Activated naive CD4-positive, alpha-beta T cell treated with anti-CD3 and anti-CD28 coated beads for 36 hours (primary cell): ENCODE measurements at regions of chr1 and their contacts with region 1.

Region 1: GRCh38 chr1:219058891-219059820 is 114.5 kb upstream of the LYPLAL1 start:
- DNase-seq: no peak
- H3K4me3 Mint-ChIP-seq: no peak overlapping the region
- H3K27ac Mint-ChIP-seq: no peak overlapping the region
- H3K4me1 Mint-ChIP-seq: peaks cover 10% of the 10 kb centered on the region
- H3K27me3 Mint-ChIP-seq: peaks cover 6% of the 10 kb centered on the region

Region 2: DNA sequence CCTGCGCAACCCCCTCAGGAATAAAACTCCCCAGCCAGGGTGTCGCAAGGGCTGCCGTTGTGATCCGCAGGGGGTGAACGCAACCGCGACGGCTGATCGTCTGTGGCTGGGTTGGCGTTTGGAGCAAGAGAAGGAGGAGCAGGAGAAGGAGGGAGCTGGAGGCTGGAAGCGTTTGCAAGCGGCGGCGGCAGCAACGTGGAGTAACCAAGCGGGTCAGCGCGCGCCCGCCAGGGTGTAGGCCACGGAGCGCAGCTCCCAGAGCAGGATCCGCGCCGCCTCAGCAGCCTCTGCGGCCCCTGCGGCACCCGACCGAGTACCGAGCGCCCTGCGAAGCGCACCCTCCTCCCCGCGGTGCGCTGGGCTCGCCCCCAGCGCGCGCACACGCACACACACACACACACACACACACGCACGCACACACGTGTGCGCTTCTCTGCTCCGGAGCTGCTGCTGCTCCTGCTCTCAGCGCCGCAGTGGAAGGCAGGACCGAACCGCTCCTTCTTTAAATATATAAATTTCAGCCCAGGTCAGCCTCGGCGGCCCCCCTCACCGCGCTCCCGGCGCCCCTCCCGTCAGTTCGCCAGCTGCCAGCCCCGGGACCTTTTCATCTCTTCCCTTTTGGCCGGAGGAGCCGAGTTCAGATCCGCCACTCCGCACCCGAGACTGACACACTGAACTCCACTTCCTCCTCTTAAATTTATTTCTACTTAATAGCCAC is 713.3 kb before region 1 on chr1:
- CTCF ChIA-PET with region 1: no interaction called
- intact Hi-C with region 1: loop called (anchors 1 kb)
- DNase-seq: peak; percentile 17
- H3K4me3 Mint-ChIP-seq: no peak overlapping the region
- H3K27ac Mint-ChIP-seq: no peak overlapping the region
- H3K4me1 Mint-ChIP-seq: peaks cover 22% of the 10 kb centered on the region
- H3K27me3 Mint-ChIP-seq: peaks cover 55% of the 10 kb centered on the region

Region 3: DNA sequence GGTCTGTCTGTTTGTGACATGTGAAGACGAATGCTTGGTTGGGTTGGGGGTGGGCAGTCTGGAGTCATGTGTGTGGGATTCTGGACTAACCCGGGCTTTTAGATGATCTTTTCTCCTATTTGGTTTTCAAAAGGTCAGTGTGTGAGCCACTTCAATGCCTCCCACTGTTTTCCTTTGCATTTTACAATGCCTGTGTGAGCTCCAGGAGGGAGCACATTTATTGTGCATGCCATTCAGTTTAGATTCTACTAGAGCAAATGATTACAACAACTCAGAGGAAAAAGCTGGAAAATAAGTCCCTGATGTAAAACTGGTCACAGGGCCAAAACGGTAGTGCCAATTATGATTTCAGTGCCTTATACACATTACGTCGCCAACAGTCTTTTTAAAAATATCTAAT is 205.4 kb after region 1 on chr1:
- CTCF ChIA-PET with region 1: no interaction called
- intact Hi-C with region 1: no loop called
- DNase-seq: no peak
- H3K4me3 Mint-ChIP-seq: no peak overlapping the region
- H3K27ac Mint-ChIP-seq: no peak overlapping the region
- H3K4me1 Mint-ChIP-seq: no peaks in the 10 kb centered on the region
- H3K27me3 Mint-ChIP-seq: no peaks in the 10 kb centered on the region

Region 4: GRCh38 chr1:219324629-219325367 is 265.6 kb after region 1 on chr1:
- CTCF ChIA-PET with region 1: no interaction called
- intact Hi-C with region 1: loop called (anchors 1 kb)
- DNase-seq: peak; percentile 30
- H3K4me3 Mint-ChIP-seq: no peak overlapping the region
- H3K27ac Mint-ChIP-seq: no peak overlapping the region
- H3K4me1 Mint-ChIP-seq: peaks cover 9% of the 10 kb centered on the region
- H3K27me3 Mint-ChIP-seq: peaks cover 4% of the 10 kb centered on the region